Activated T-helper 1 cell treated with anti-CD3 and anti-CD28 coated beads, Interleukin-12 subunit alpha, Interleukin-12 subunit beta, Interleukin-2, Interleukin-4 antibody, amounts not matched to agents 30 ng/mL and 10 ng/mL and 1 ng/mL, durations not matched to agents 14 hours and 24 hours and 36 hours (primary cell): ENCODE measurements at regions of chr2 and their contacts with region 1.

Region 1: DNA sequence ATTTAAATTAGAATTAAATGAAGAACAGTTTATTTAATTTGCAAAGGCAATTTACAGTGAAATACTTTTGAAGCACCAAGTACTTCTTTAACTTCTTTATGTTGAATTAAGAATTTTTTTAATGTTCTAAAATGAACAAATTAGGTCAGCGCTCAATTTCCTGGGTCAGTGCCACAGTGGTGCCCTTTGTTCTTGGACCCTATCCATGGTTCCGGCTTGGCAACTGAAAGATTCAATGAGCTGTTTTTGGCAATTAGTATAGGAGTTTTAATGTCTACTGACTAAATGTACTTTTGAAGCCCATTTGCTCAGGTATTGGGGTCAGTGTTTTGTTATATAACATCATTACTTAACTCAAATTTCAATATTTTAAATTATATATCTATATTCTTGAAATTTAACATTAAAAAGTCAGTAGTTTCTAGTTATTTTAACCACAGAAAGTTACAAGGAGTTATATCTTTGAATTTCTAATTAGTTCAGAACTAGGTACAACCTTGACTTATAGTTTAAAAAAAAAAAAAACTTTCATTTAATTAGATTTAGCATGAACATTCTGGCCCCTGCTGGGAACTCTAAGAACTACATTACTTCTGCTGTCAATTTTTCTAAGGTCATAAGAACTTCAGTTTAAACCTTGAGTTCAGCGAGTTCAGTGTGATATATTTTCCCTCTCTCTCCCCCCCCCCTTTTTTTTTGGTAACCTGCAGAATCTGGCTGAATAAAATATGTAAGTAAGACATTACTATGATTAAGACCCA is 7.6 kb upstream of the MSTN start:
- DNase-seq: no peak
- H3K4me3 Mint-ChIP-seq: no peak overlapping the region
- H3K27ac Mint-ChIP-seq: no peak overlapping the region
- H3K4me1 Mint-ChIP-seq: no peaks in the 10 kb centered on the region
- H3K27me3 Mint-ChIP-seq: peaks cover 8% of the 10 kb centered on the region

Region 2: DNA sequence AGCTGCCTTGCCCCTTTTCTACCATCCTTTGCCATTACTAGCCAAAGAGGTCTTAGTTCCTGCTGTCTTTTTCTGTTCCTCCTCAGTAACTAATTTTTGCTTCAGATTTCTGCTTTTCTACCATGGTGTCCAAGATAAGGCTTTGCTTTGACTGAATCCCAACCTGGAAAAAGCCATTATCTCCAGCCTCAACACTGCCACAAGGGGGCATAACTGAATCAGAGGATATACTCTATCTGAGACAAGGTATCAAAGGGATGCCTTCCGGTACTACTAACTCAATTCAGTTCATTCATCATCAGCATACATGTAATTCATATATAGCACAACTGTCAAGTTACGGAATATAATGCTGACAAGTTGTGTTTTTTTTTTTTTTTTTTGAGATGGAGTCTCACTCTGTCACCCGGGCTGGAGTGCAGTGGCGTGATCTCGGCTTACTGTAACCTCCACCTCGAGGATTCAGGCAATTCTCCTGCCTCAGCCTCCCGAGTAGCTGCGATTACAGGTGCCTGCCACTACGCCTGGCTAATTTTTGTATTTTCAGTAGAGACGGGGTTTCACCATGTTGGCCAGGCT is 318.9 kb before region 1 on chr2:
- intact Hi-C with region 1: loop called (anchors 1 kb)
- DNase-seq: peak; percentile 17
- H3K4me3 Mint-ChIP-seq: no peak overlapping the region
- H3K27ac Mint-ChIP-seq: no peak overlapping the region
- H3K4me1 Mint-ChIP-seq: no peaks in the 10 kb centered on the region
- H3K27me3 Mint-ChIP-seq: no peaks in the 10 kb centered on the region

Region 3: GRCh38 chr2:189798312-189799029 is 271.6 kb before region 1 on chr2:
- intact Hi-C with region 1: loop called (anchors 1 kb)
- DNase-seq: no peak
- H3K4me3 Mint-ChIP-seq: no peak overlapping the region
- H3K27ac Mint-ChIP-seq: no peak overlapping the region
- H3K4me1 Mint-ChIP-seq: no peaks in the 10 kb centered on the region
- H3K27me3 Mint-ChIP-seq: no peaks in the 10 kb centered on the region

Region 4: GRCh38 chr2:190119257-190119656 is 49.1 kb after region 1 on chr2:
- intact Hi-C with region 1: no loop called
- DNase-seq: no peak
- H3K4me3 Mint-ChIP-seq: peak overlapping the region; percentile 27
- H3K27ac Mint-ChIP-seq: no peak overlapping the region
- H3K4me1 Mint-ChIP-seq: no peaks in the 10 kb centered on the region
- H3K27me3 Mint-ChIP-seq: peaks cover 5% of the 10 kb centered on the region